Activated CD4-positive, alpha-beta T cell treated with anti-CD3 and anti-CD28 coated beads, Interleukin-2, amount 10 ng/mL, durations not matched to agents 24 days and 14 days (primary cell): ENCODE measurements at regions of chr1 and their contacts with region 1.

Region 1: GRCh38 chr1:203861379-203862184 is at the start of gene SNRPE:
- DNase-seq: peak; percentile 99
- H3K4me3 Mint-ChIP-seq: peak within 1 kb of the TSS; percentile 93
- H3K27ac Mint-ChIP-seq: peak within 1 kb of the TSS; percentile 98
- H3K4me1 Mint-ChIP-seq: peaks cover 20% of the 10 kb centered on the region
- H3K27me3 Mint-ChIP-seq: no peaks in the 10 kb centered on the region
- total RNA-seq, gene SNRPE: 292 and 302 TPM in 2 replicates

Region 2: DNA sequence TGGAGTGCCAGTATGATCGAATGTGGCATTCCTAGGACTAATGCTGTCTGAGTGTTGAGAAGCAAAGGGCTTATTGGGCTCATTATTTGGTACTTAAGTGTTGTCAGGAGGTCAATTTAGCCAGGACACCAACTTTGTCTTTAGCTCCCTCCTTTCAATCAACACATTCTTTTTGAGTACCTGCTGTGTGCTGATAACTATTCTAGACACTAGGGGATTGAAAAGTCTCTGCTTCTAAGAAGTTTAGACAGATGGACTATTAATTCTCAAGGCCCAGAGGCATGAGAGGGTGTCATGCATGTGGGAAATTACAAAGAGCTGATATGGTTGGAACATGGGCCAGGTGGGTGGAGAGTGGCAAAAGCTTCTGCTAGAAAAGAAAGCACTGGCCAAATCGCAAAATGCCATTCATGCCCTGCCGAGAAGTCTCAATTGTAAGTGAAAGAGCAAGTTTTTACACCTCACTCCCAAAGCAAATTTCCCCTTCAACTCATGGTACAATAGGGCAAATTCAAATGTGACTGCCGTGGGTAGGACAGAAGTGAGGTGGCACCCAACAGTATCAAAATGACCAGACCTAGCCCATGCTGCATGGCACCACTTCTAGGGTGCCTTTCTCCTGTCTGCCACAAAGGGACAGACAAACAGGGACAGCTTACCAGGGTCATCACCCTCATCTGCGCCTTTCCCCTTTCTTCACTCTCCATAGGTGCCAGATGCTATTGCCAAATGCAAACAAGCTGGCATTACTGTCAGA is 150.2 kb before region 1 on chr1:
- intact Hi-C with region 1: no loop called
- DNase-seq: no peak
- H3K4me3 Mint-ChIP-seq: no peak overlapping the region
- H3K27ac Mint-ChIP-seq: no peak overlapping the region
- H3K4me1 Mint-ChIP-seq: no peaks in the 10 kb centered on the region
- H3K27me3 Mint-ChIP-seq: no peaks in the 10 kb centered on the region

Region 3: GRCh38 chr1:203795441-203796235 is 65.9 kb before region 1 on chr1 and contains the starts of genes ZBED6 and ZC3H11A:
- intact Hi-C with region 1: loop called (anchors 1 kb)
- DNase-seq: peak; percentile 100
- H3K4me3 Mint-ChIP-seq: peak within 1 kb of the TSS; percentile 95
- H3K27ac Mint-ChIP-seq: peak within 1 kb of the TSS; percentile 97
- H3K4me1 Mint-ChIP-seq: peaks cover 39% of the 10 kb centered on the region
- H3K27me3 Mint-ChIP-seq: no peaks in the 10 kb centered on the region
- total RNA-seq, gene ZBED6: 19.1 and 21.1 TPM in 2 replicates
- total RNA-seq, gene ZC3H11A: 82.1 and 83.9 TPM in 2 replicates

Region 4: DNA sequence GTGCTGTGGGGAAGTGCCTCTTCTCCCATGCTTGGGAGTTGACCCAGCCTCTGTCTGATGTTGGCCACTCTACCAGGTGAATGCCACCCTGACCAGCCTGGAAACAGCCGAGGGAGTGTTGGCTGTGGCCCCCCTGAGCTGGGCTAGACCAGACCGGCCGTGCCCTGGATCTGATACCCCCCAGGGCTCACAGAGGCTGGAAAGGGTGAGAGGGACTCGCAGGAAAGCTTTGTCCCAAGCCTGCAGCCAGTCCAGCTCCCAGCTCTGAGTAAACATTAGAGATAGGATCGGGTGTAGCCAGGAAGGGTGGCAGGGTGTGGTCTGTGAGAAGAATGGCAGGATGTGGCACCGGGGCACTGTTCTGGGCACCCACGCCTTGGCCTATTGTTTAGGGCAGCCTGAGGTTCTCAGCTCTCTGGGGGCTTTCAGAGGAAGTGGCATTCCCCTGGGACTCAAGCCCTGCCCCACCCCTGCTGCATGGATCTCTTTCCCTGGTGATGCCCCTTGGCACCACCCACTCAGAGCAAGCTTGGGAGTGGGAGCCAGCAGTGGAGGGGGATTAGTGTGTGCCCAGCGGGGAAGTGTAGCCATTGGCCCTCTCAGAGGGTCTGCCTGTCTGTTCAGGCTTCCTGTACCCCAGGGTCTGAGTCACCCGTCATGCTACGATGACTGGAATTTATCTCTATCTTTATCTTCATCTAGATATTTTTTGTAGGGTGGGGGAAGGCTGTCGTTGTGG is 242.7 kb after region 1 on chr1:
- intact Hi-C with region 1: no loop called
- DNase-seq: no peak
- H3K4me3 Mint-ChIP-seq: peak overlapping the region; percentile 9
- H3K27ac Mint-ChIP-seq: peak overlapping the region; percentile 23
- H3K4me1 Mint-ChIP-seq: peaks cover 19% of the 10 kb centered on the region
- H3K27me3 Mint-ChIP-seq: peaks cover 3% of the 10 kb centered on the region

Region 5: GRCh38 chr1:204128964-204129896 is 267.6 kb after region 1 on chr1:
- intact Hi-C with region 1: loop called (anchors 1 kb)
- DNase-seq: peak; percentile 86
- H3K4me3 Mint-ChIP-seq: peak overlapping the region; percentile 53
- H3K27ac Mint-ChIP-seq: no peak overlapping the region
- H3K4me1 Mint-ChIP-seq: peaks cover 9% of the 10 kb centered on the region
- H3K27me3 Mint-ChIP-seq: no peaks in the 10 kb centered on the region

Region 6: DNA sequence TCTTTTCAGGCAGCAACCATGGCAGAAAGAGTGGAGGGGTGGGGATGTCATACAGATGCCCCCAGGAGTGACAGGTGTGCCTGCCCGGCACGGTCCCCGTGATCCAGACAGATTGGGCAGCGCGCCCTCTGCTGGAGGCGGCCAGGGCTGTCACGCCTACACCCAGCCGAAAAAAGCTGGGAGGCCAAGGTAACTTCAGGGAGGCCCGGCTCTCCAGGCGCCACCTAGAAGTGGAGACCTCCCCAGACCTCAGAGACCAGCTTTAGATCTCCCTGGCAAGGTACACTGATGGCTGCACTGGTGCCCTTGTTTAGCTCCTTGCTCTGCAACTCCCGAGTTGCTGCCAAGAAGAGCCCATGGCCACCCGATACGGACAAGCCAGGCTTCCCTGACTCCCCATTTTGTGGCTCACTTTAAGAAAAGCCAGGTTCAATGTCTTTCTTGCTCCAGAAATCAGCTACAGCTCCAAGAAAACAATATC is 345.6 kb after region 1 on chr1:
- intact Hi-C with region 1: loop called (anchors 5 kb)
- DNase-seq: peak; percentile 92
- H3K4me3 Mint-ChIP-seq: no peak overlapping the region
- H3K27ac Mint-ChIP-seq: no peak overlapping the region
- H3K4me1 Mint-ChIP-seq: no peaks in the 10 kb centered on the region
- H3K27me3 Mint-ChIP-seq: peaks cover 33% of the 10 kb centered on the region

Region 7: DNA sequence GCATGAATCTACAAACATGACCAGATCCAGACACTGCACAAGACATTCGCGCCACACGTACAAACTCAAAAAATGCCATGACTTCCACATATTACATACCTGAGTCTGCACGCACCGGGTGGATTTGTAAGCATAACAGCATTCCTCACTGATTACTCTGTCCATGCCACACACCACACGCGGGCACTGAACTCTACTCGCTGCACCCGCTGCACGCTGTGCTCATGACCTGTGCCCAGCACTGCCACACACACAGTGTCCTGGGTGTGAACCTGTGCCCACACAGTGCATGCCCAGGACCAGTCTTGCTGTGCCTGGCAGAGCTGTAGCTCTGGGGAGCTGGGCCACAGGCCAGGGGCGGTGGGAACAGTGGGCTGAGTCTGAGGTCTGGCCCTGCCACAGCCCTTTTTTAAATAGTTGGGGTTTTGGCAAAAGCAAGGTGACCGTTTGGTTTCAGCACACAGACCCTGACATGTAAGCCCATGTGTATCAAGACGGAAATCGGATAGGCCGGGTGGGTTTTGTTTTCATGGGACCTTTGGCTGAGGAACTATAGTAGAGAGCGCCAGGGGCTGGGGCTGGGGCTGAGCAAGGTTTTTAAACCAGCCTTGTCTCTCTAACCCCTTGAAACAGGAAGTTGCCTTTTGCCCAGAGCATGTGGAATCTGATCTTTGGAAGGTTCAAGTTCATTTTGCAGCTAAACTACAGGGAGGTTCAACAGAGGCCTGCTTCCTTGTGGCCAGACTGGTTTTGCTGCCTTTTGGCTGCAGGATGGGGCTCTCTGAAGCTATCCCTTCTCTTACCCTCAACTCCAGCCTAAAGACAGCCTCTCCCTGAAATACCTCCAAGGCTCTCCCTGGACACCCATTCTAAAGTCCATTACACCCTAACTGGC is 364.5 kb after region 1 on chr1:
- intact Hi-C with region 1: no loop called
- DNase-seq: no peak
- H3K4me3 Mint-ChIP-seq: no peak overlapping the region
- H3K27ac Mint-ChIP-seq: no peak overlapping the region
- H3K4me1 Mint-ChIP-seq: no peaks in the 10 kb centered on the region
- H3K27me3 Mint-ChIP-seq: no peaks in the 10 kb centered on the region

Region 8: DNA sequence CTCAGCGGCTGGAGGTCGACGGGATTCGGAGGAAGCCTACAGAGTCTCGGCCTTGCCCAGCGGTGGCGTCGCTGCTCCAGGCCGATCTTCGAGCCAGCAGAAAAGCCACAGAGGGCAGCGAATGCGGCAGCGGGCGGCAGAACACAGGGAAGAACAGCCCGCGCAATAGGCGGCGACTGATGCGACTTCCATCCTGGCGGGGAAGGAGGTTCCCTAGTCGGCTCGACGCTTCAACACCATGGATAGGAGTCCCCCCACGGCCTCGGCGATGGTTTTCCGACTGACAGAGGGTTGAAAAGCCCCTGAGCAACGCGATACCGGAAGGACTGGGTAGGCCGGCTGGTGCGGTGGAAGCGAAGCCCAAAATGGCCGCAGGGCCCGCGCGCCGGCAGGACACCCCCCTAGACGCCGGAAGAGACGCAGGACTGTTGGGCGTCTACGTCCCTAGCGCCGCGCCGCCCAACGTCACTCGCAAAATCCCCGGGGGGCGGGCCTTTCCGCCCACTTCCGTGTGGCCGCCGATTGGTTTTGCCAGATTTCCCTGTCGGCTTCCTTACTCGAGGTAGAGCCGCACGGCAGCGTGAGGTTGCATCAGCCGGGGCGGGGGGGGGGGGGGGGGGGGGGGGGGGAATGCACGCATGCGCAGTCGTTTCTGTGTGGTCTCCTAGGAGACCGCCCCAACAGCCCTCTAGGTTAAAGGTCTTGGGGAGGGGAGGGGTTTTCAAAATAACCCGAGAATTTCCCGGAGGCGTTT is 550.0 kb after region 1 on chr1 and contains the start of gene PPP1R15B:
- intact Hi-C with region 1: loop called (anchors 5 kb)
- DNase-seq: peak; percentile 99
- H3K4me3 Mint-ChIP-seq: peak within 1 kb of the TSS; percentile 97
- H3K27ac Mint-ChIP-seq: peak within 1 kb of the TSS; percentile 99
- H3K4me1 Mint-ChIP-seq: peaks cover 9% of the 10 kb centered on the region
- H3K27me3 Mint-ChIP-seq: no peaks in the 10 kb centered on the region
- total RNA-seq, gene PPP1R15B: 70.9 and 74.0 TPM in 2 replicates

Region 9: GRCh38 chr1:204516180-204516879 is 654.7 kb after region 1 on chr1 and contains the start of gene MDM4:
- intact Hi-C with region 1: loop called (anchors 1 kb)
- DNase-seq: peak; percentile 97
- H3K4me3 Mint-ChIP-seq: no peak within 1 kb of the TSS
- H3K27ac Mint-ChIP-seq: no peak within 1 kb of the TSS
- H3K4me1 Mint-ChIP-seq: peaks cover 33% of the 10 kb centered on the region
- H3K27me3 Mint-ChIP-seq: no peaks in the 10 kb centered on the region
- total RNA-seq, gene MDM4: 81.5 and 85.5 TPM in 2 replicates

Region 10: DNA sequence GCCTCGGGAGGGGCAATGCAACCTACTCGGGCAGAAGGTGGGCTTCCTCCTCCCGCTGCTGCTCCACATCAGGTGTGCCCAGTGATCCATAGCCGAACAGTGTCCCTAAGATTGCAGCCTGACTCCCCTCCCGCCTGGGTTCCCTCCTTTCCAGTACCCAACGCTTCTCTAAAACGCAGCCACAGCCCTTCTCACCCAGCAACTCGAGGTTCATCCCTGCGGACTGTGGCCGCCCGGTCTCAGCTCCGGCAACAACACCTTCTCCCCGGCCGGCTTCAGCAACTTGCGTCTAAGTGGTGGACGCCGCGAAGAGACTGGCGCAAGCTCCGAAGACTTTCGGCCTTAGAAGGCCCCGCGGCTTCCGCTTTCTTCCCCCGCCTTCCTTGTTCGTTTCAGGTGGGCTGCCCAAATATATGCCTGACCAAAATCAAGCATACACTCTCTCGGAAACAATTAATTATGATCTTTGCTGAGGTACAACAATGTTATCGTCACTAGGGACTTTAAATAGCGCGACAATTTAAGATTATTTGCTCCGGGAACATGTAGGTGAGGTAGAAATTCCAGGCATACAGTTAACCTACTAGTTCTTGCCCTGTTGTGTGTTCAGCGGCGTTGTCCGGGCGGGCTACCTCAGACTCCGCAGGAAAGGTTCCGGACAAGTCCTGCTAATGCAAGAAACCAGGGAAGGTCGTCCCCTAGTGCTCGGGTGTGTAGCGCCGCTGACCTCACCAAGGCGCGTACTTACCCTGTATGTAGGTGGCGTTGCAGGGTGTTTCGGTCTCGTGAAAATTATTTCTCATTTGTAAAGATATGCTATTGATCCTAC is 1260.3 kb after region 1 on chr1 and contains the start of gene RBBP5:
- intact Hi-C with region 1: loop called (anchors 5 kb)
- DNase-seq: peak; percentile 98
- H3K4me3 Mint-ChIP-seq: peak within 1 kb of the TSS; percentile 98
- H3K27ac Mint-ChIP-seq: peak within 1 kb of the TSS; percentile 98
- H3K4me1 Mint-ChIP-seq: peaks cover 34% of the 10 kb centered on the region
- H3K27me3 Mint-ChIP-seq: no peaks in the 10 kb centered on the region
- total RNA-seq, gene RBBP5: 24.0 and 27.2 TPM in 2 replicates